Activated CD4-positive, alpha-beta T cell treated with anti-CD3 and anti-CD28 coated beads for 36 hours (primary cell): ENCODE measurements at regions of chr9 and their contacts with region 1.

Region 1: DNA sequence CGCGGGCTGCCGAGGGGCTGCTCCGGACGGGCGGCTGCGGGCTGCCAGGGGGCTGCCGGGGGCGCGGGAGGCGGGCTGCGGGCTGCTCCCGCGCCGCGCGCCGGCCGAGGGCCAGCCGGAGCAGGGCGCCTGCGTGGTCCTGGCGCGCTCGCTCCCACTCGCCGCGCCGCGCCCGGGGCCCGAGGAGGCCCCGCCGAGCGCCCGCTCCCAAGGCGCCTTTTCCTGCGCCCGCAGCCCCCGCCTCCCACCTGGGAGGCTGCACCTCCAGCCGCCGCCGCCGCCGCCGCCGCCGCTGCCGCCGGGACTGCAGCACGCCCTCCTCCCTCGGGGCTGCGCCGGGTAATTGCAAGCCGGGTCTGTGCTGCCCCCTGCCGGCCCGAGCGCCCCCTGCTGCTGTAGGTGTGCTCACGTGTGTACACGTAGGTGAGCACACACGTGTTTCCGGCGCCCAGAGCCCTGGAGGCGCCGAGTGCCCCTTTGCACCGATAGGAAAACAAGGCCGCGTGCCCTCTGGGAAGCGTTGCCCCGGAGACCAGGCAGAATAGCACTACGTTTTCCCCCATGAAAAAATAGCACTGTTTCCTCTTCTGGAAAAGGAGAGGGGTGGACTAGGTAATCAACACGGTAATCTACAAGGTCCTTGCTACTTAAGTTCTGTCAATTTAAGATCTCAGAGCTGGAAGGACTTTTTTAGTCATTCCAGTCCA is at the start of gene EPB41L4B:
- DNase-seq: peak; percentile 96
- ATAC-seq: peak; percentile 99
- H3K4me3 Mint-ChIP-seq: peak within 1 kb of the TSS; percentile 61
- H3K27ac Mint-ChIP-seq: no peak within 1 kb of the TSS
- H3K4me1 Mint-ChIP-seq: peaks cover 13% of the 10 kb centered on the region
- H3K27me3 Mint-ChIP-seq: peaks cover 45% of the 10 kb centered on the region
- total RNA-seq, gene EPB41L4B: 0.23 to 0.33 TPM

Region 2: DNA sequence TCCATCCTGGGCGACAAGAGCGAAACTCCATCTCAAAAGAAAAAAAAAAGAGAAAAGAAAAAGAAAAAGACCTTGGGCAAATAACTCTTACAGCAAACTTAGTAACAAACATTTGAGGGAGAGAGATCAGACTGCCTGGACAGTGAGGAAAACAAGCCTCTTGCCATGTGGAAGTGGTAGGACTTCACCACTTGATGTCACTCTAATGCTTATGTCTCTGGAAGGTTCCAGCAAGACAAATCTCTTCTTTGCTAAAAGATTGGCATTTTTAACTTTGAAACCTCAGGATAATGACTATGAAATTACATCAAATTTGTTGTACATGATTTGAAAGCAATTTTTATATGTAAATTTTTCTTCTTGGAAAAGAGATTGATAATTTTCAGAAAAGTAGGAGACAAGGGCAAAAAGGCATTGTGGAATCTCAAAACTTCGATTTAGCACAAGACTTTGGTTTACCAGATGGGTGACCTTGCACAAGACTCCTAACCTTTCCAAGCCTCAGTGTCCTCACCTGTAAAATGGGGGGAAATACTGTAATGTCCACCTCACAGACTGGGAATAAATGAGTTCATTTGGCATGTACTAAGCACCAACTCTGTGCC is 470.5 kb before region 1 on chr9:
- CTCF ChIA-PET with region 1: no interaction called
- POLR2A ChIA-PET with region 1: no interaction called
- intact Hi-C with region 1: loop called in 1 of 2 experiments (anchors 5 kb)
- DNase-seq: no peak
- ATAC-seq: no peak
- H3K4me3 Mint-ChIP-seq: no peak overlapping the region
- H3K27ac Mint-ChIP-seq: no peak overlapping the region
- H3K4me1 Mint-ChIP-seq: no peaks in the 10 kb centered on the region
- H3K27me3 Mint-ChIP-seq: peaks cover 2% of the 10 kb centered on the region

Region 3: GRCh38 chr9:108933718-108934322 is 387.1 kb before region 1 on chr9 and contains the start of gene ELP1:
- CTCF ChIA-PET with region 1: interaction called, 4 read pairs
- POLR2A ChIA-PET with region 1: no interaction called
- intact Hi-C with region 1: loop called (anchors 1 to 10 kb)
- DNase-seq: peak; percentile 96
- ATAC-seq: peak; percentile 88
- H3K4me3 Mint-ChIP-seq: peak within 1 kb of the TSS; percentile 98
- H3K27ac Mint-ChIP-seq: peak within 1 kb of the TSS; percentile 95
- H3K4me1 Mint-ChIP-seq: peaks cover 29% of the 10 kb centered on the region
- H3K27me3 Mint-ChIP-seq: no peaks in the 10 kb centered on the region
- total RNA-seq, gene ELP1: 31.1 to 58.0 TPM

Region 4: DNA sequence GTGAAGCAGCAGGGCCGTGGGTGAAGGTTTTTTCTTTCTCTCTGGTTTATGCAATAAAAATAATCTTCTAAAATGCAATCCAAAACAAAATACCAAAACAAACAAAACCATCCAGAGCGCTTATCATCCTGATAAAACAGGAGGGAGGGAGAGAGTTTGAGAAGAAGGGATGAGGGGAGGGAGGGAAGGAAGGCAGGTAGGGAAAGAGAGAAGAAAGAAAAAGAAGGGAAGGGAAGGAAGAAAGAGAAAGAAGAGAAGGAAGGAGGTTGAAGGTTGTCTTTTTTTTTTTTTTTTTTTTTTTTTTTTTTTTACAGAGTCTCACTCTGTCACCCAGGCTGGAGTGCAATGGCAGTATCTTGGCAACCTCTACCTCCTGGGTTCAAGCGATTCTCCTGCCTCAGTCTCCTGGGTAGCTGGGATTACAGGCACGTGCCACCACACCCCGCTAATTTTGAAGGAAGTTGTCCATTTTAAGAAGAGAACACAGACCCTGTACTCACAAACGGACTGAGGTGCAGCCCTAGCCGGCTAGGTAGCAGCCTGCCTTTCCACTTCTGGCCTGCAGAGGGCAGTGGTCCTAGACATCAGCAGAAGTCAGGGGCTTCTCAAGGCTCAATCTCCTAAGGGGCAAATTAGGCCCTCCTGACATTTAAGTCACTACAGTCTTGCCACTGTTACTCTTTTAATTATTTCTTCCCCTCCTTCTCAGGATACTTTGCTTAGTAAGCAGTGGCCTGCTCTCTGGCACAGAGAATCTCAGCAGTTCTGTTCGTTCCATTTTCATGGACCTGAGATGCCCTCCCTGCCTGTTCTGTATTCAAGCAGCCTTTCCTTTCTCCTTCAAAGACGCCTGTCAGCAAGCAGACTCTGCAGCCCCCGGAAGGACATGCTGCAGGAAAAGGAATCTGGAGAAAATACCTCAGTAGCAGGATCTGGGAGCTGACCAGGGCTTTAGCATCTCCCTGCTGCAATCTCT is 76.5 kb before region 1 on chr9:
- CTCF ChIA-PET with region 1: interaction called, 3 read pairs
- POLR2A ChIA-PET with region 1: no interaction called
- intact Hi-C with region 1: loop called (anchors 1 to 2 kb)
- DNase-seq: peak; percentile 81
- ATAC-seq: peak; percentile 69
- H3K4me3 Mint-ChIP-seq: no peak overlapping the region
- H3K27ac Mint-ChIP-seq: no peak overlapping the region
- H3K4me1 Mint-ChIP-seq: no peaks in the 10 kb centered on the region
- H3K27me3 Mint-ChIP-seq: peaks cover 23% of the 10 kb centered on the region

Region 5: DNA sequence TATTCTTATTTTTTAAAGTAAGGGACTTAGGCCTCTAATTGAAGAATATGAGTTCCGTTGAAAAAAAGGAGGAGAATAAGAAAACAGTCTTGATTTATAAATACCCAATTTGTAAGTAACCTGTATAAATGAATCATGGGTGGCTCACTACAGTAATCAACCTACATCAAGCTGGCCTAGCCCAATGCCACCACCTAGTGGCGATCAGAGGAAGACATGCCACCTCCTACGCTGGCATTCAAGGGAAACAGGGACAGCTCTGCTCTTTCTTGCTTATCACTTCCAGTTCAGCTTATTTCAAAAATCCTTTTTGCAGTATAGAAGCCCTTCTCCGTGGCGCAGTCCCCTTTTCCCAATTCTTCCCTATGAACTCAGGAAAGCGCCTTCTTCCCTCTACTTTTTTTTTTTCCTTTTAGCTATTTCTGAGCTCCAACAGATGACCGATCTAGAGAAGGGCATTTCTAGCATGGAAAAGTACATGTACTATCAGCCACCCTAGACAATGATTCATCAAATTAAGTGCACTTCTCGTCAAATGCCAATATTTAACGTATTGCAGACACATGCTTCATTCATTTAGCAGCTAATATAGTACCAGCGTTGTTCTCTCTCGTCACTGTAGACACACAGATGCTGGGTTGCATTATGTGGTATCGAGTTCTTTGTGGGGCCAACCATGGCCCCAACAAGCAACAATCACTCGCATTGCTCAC is 148.9 kb after region 1 on chr9:
- CTCF ChIA-PET with region 1: interaction called, 3 read pairs
- POLR2A ChIA-PET with region 1: no interaction called
- intact Hi-C with region 1: loop called in 1 of 2 experiments (anchors 1 kb)
- DNase-seq: peak; percentile 85
- ATAC-seq: peak; percentile 97
- H3K4me3 Mint-ChIP-seq: no peak overlapping the region
- H3K27ac Mint-ChIP-seq: no peak overlapping the region
- H3K4me1 Mint-ChIP-seq: peaks cover 8% of the 10 kb centered on the region
- H3K27me3 Mint-ChIP-seq: peaks cover 11% of the 10 kb centered on the region

Region 6: GRCh38 chr9:109640580-109641371 is 319.9 kb after region 1 on chr9:
- CTCF ChIA-PET with region 1: no interaction called
- POLR2A ChIA-PET with region 1: no interaction called
- intact Hi-C with region 1: no loop called
- DNase-seq: peak; percentile 10
- ATAC-seq: no peak
- H3K4me3 Mint-ChIP-seq: no peak overlapping the region
- H3K27ac Mint-ChIP-seq: no peak overlapping the region
- H3K4me1 Mint-ChIP-seq: no peaks in the 10 kb centered on the region
- H3K27me3 Mint-ChIP-seq: peaks cover 51% of the 10 kb centered on the region